ENCODE measurements at regions of chr12 and their contacts with region 1.

Region 1: DNA sequence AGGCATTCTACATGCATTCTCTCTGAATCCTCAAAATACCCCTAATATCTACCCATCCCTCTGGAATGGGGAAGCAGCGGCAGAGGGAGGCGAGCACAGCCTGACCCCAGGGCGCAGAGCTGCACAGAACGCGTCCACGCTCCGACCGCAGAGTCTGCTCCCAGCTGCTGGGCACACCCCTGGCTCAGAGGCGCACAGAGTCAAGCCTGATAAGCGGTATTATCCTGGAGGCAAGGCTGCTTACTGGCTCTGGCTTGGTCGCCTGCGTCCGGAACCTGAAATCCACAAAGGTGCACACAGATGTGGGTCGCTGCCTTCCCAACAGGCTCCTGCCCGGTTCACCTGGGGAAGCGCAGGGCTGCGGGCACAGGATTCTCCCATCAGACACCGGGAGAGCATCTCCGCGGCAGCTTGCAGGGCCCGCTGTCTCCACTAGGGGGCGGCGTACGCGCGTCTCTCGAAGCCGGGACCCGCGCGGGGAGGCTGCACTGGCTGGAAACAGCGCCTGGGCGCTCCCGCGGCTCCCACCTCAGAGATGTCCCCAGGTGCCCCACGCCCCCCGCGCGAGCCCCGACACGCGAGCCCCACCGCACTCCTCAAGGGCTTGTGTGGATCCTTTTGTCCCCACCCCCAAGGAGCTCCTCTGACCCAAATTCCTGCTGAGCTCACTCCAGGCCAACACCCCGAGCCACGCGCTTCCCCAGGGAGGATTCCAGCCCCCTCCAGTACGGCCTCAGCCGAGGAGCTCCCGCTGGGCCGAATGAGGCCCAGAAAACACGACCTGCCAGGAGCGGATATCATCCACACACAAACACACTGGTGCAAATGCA is 120.1 kb upstream of the FZD10 start:
- DNase-seq: no peak
- H3K4me3 ChIP-seq: no peak overlapping the region
- H3K27ac ChIP-seq: no peak overlapping the region
- H3K4me1 ChIP-seq: no peaks in the 10 kb centered on the region
- H3K27me3 ChIP-seq: peaks cover 0 to 46% of the 10 kb centered on the region in 2 donors
- CTCF ChIP-seq: peak; percentile 43 to 77 (median 72)
- POLR2A ChIP-seq: no peak

Region 2: GRCh38 chr12:130070126-130070611 is 28.0 kb after region 1 on chr12:
- intact Hi-C with region 1: no loop called
- DNase-seq: peak in 1 of 2 donors; percentile 42
- H3K4me3 ChIP-seq: peak overlapping the region; percentile 21 to 55 (median 38)
- H3K27ac ChIP-seq: peak overlapping the region; percentile 35 to 66
- H3K4me1 ChIP-seq: no peaks in the 10 kb centered on the region
- H3K27me3 ChIP-seq: no peaks in the 10 kb centered on the region
- CTCF ChIP-seq: no peak
- POLR2A ChIP-seq: no peak

Region 3: GRCh38 chr12:130335517-130336392 is 293.6 kb after region 1 on chr12:
- intact Hi-C with region 1: loop called (anchors 5 kb)
- DNase-seq: no peak
- H3K4me3 ChIP-seq: no peak overlapping the region
- H3K27ac ChIP-seq: no peak overlapping the region
- H3K4me1 ChIP-seq: no peaks in the 10 kb centered on the region
- H3K27me3 ChIP-seq: peaks cover 3 to 29% of the 10 kb centered on the region in 2 donors
- CTCF ChIP-seq: peak; percentile 38 to 83 (median 71)
- POLR2A ChIP-seq: no peak

Measured in breast epithelium (tissue), 4 donors.